CD4-positive, alpha-beta T cell (primary cell): ENCODE measurements at regions of chrX and their contacts with region 1.

Region 1: DNA sequence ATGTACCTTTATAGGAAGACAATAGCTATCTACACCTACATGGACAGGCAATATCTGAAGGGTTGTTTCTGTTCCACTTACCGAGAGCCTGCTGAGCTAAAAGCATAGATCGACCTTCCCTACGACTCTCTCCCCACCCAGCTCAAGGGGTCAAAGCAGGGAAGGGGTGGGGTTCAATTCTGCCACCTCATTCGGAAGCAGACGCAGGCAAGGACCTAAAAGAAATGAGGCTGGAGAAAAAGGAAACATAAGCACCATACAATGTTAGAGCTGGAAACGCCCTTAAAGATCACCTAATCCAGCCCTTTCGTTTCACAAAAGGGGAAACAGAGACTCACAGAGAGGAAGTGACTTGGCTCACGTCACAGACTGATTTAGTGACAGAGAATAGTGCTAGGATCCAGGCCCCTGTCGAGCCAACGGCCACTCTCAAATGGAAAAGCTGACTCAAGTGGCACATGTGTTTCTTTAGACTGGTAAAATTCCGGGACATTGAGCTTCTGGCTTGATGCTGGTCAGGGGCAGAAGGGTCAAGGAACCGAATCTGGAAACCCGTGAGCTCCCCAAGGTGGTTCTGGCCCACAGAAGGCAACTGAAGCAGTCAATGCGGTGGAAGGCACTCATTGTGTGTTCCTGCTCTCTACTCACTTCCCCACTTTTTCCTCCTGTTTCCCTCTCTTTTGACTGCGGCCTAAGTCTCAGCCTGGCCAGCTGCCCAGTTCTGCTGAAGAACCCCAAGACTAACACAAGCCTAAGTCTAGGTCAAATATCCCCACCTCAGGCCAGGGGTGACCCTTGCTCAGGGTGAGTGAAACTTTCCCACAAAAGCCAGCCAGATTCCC is 7.5 kb downstream of the SEPTIN6 start:
- DNase-seq: peak in 4 of 14 experiments; percentile 51 to 86 (median 74)
- ATAC-seq: peak; percentile 40
- H3K4me3 ChIP-seq: peak overlapping the region; percentile 48
- H3K4me3 Mint-ChIP-seq: peak overlapping the region; percentile 93
- H3K27ac ChIP-seq: peak overlapping the region; percentile 95 to 98
- H3K27ac Mint-ChIP-seq: peak overlapping the region; percentile 96
- H3K4me1 ChIP-seq: peaks cover 81% of the 10 kb centered on the region
- H3K4me1 Mint-ChIP-seq: peaks cover 85% of the 10 kb centered on the region
- H3K27me3 ChIP-seq: no peaks in the 10 kb centered on the region
- H3K27me3 Mint-ChIP-seq: no peaks in the 10 kb centered on the region
- CTCF ChIP-seq: no peak

Region 2: GRCh38 chrX:119655125-119655524 is 30.3 kb before region 1 on chrX:
- CTCF ChIA-PET with region 1: interaction called, 3 read pairs
- POLR2A ChIA-PET with region 1: interaction called, 22 read pairs
- intact Hi-C with region 1: loop called (anchors 2 to 5 kb)
- DNase-seq: peak in 12 of 14 experiments; percentile 18 to 70 (median 49)
- ATAC-seq: peak; percentile 51
- H3K4me3 ChIP-seq: no peak overlapping the region
- H3K4me3 Mint-ChIP-seq: peak overlapping the region; percentile 56
- H3K27ac ChIP-seq: peak overlapping the region; percentile 29 to 64
- H3K27ac Mint-ChIP-seq: peak overlapping the region; percentile 90
- H3K4me1 ChIP-seq: peaks cover 24% of the 10 kb centered on the region
- H3K4me1 Mint-ChIP-seq: peaks cover 48% of the 10 kb centered on the region
- H3K27me3 ChIP-seq: no peaks in the 10 kb centered on the region
- H3K27me3 Mint-ChIP-seq: no peaks in the 10 kb centered on the region
- CTCF ChIP-seq: no peak

Region 3: GRCh38 chrX:119672242-119672837 is 13.1 kb before region 1 on chrX:
- CTCF ChIA-PET with region 1: interaction called, 42 read pairs
- POLR2A ChIA-PET with region 1: interaction called, 199 read pairs
- intact Hi-C with region 1: no loop called
- DNase-seq: no peak
- ATAC-seq: no peak
- H3K4me3 ChIP-seq: no peak overlapping the region
- H3K4me3 Mint-ChIP-seq: peak overlapping the region; percentile 10
- H3K27ac ChIP-seq: peak overlapping the region in 1 of 2 donors; percentile 29
- H3K27ac Mint-ChIP-seq: peak overlapping the region; percentile 72
- H3K4me1 ChIP-seq: peaks cover 57% of the 10 kb centered on the region
- H3K4me1 Mint-ChIP-seq: peaks cover 47% of the 10 kb centered on the region
- H3K27me3 ChIP-seq: no peaks in the 10 kb centered on the region
- H3K27me3 Mint-ChIP-seq: no peaks in the 10 kb centered on the region
- CTCF ChIP-seq: no peak

Region 4: GRCh38 chrX:119943185-119943988 is 257.9 kb after region 1 on chrX and contains the start of gene NKAP:
- CTCF ChIA-PET with region 1: no interaction called
- POLR2A ChIA-PET with region 1: no interaction called
- intact Hi-C with region 1: no loop called
- DNase-seq: peak; percentile 64 to 91 (median 72)
- ATAC-seq: peak; percentile 84
- H3K4me3 ChIP-seq: peak within 1 kb of the TSS; percentile 95
- H3K4me3 Mint-ChIP-seq: peak within 1 kb of the TSS; percentile 96
- H3K27ac ChIP-seq: peak within 1 kb of the TSS; percentile 91 to 93
- H3K27ac Mint-ChIP-seq: peak within 1 kb of the TSS; percentile 87
- H3K4me1 ChIP-seq: peaks cover 19% of the 10 kb centered on the region
- H3K4me1 Mint-ChIP-seq: peaks cover 27% of the 10 kb centered on the region
- H3K27me3 ChIP-seq: no peaks in the 10 kb centered on the region
- H3K27me3 Mint-ChIP-seq: peaks cover 2% of the 10 kb centered on the region
- CTCF ChIP-seq: no peak
- total RNA-seq, gene NKAP: 14.5 to 15.6 TPM